ENCODE measurements at regions of chr2 and their contacts with region 1.

Region 1: DNA sequence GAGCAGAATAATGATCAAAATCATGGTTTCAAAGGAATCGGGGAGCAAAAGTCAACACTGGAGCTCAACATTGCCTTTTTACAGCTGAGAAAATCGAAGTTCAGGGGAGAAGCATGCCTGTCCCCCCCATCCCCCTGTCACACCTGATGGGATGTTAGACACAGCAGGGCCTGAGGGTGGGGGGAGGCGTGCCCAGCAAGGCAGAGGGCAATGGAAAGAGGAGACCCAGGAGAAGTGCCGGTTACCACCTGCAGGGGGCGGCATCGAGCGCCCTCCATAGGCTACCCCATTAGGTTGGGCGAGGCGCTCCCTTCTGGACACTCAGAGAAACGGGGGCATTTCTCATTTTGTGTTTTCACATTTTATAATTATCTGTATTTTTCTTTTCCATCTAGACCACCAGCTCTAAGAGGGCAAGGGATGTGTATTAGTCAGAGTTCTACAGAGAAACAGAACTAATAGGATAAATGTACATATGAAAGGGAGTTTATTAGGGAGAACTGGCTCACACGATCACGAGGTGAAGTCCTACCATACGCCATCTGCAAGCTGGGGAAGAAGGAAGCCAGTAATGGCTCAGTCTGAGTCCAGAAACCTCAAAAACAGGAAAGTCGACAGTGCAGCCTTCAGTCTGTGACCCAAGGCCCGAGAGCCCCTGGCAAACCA is 271.3 kb downstream of the LRATD1 start:
- DNase-seq: peak in 1 of 2 donors; percentile 49
- ATAC-seq: peak in 2 of 3 donors; percentile 60 to 77
- H3K4me3 ChIP-seq: no peak overlapping the region
- H3K4me3 Mint-ChIP-seq: no peak overlapping the region
- H3K27ac ChIP-seq: no peak overlapping the region
- H3K27ac Mint-ChIP-seq: no peak overlapping the region
- H3K4me1 ChIP-seq: no peaks in the 10 kb centered on the region
- H3K4me1 Mint-ChIP-seq: peaks cover 0 to 5% of the 10 kb centered on the region in 2 donors
- H3K27me3 ChIP-seq: no peaks in the 10 kb centered on the region
- H3K27me3 Mint-ChIP-seq: no peaks in the 10 kb centered on the region
- CTCF ChIP-seq: peak; percentile 23

Region 2: GRCh38 chr2:15577071-15577735 is 673.4 kb after region 1 on chr2:
- intact Hi-C with region 1: loop called (anchors 5 kb)
- DNase-seq: peak; percentile 73 to 91
- ATAC-seq: peak; percentile 87 to 100 (median 99)
- H3K4me3 ChIP-seq: no peak overlapping the region
- H3K4me3 Mint-ChIP-seq: no peak overlapping the region
- H3K27ac ChIP-seq: no peak overlapping the region
- H3K27ac Mint-ChIP-seq: no peak overlapping the region
- H3K4me1 ChIP-seq: peaks cover 3% of the 10 kb centered on the region
- H3K4me1 Mint-ChIP-seq: no peaks in the 10 kb centered on the region
- H3K27me3 ChIP-seq: no peaks in the 10 kb centered on the region
- H3K27me3 Mint-ChIP-seq: peaks cover 9 to 11% of the 10 kb centered on the region in 2 donors
- CTCF ChIP-seq: peak; percentile 82